AG04450 (cell line): ENCODE measurements at regions of chr5 and their contacts with region 1.

Region 1: DNA sequence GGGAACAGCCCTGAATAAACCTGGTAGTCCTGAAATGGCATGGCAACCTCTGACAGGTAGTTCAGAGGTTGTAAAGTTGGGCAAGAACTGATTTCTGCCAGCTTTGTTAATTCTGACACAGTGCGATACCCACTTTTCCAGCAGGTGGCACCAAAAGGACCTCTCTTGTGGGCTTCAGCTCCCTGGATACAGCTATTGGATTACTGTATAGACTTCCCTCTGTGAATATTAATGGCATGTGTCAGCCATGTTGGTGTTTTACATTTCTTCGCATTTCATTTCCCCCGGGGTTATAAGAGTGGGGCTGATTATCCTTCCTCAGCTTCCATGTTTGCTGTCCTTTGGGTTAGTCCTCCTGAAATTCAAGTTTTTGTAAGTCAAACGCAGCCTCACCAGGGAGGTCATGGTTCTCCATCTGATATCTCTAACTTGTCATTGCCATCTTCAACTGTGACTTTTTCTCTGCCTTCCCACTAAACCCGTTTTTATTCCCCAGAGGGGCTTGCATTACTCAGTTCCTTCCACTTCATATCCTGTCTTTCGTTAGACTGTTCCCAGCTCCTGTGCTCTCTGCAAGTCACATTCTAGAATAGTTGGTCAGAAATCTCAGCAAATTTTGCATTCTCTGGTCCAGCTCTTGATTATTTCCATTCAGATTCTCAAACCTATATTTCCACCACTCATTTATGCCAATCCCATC is 135.6 kb downstream of the LIFR start:
- DNase-seq: peak; percentile 29
- H3K4me3 ChIP-seq: no peak overlapping the region
- H3K27ac ChIP-seq: no peak overlapping the region
- H3K27me3 ChIP-seq: peaks cover 2% of the 10 kb centered on the region
- CTCF ChIP-seq: peak; percentile 86

Region 2: GRCh38 chr5:38396766-38397165 is 24.1 kb before region 1 on chr5:
- CTCF ChIA-PET with region 1: interaction called, 11 read pairs
- POLR2A ChIA-PET with region 1: no interaction called
- DNase-seq: no peak
- H3K4me3 ChIP-seq: no peak overlapping the region
- H3K27ac ChIP-seq: no peak overlapping the region
- H3K27me3 ChIP-seq: peaks cover 48% of the 10 kb centered on the region
- CTCF ChIP-seq: no peak

Region 3: GRCh38 chr5:38433160-38433861 is 12.5 kb after region 1 on chr5:
- CTCF ChIA-PET with region 1: interaction called, 26 read pairs
- POLR2A ChIA-PET with region 1: interaction called, 3 read pairs
- DNase-seq: peak; percentile 67
- H3K4me3 ChIP-seq: no peak overlapping the region
- H3K27ac ChIP-seq: peak overlapping the region; percentile 90
- H3K27me3 ChIP-seq: no peaks in the 10 kb centered on the region
- CTCF ChIP-seq: peak; percentile 30; the same call in 1 of the 2 replicates

Region 4: GRCh38 chr5:38515646-38516045 is 94.8 kb after region 1 on chr5:
- CTCF ChIA-PET with region 1: interaction called, 11 read pairs
- POLR2A ChIA-PET with region 1: no interaction called
- DNase-seq: no peak
- H3K4me3 ChIP-seq: no peak overlapping the region
- H3K27ac ChIP-seq: no peak overlapping the region
- H3K27me3 ChIP-seq: no peaks in the 10 kb centered on the region
- CTCF ChIP-seq: peak; percentile 61

Region 5: DNA sequence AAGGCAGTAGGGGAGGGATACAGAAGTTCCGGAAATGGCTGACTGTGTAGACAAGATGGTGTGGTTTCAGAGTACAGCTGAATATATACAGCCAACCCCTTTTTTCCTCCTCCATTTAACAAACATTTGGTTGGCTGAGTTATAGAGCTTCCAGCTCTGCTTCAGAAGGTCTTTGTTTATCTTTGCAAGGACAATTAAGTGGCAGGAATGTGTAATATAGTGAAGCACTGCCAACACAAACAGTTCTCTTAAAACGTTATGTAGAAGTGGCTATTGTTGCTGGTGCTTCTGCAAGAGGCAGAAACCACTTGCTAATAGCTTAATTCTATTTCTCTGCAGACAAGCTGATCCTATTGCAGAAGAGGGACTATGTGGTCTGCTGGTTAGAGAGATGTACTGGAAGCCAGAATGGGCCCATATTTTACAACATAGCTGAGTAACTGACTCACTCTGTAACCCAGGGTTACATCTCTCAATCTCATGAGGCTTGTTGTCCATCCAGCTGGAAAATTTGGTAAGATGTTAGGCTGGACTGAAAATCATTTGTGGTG is 362.2 kb after region 1 on chr5:
- CTCF ChIA-PET with region 1: interaction called, 13 read pairs
- POLR2A ChIA-PET with region 1: no interaction called
- DNase-seq: peak; percentile 83
- H3K4me3 ChIP-seq: no peak overlapping the region
- H3K27ac ChIP-seq: peak overlapping the region; percentile 77
- H3K27me3 ChIP-seq: no peaks in the 10 kb centered on the region
- CTCF ChIP-seq: peak; percentile 37